ACHN (cell line): ENCODE measurements at regions of chr2 and their contacts with region 1.

Region 1: GRCh38 chr2:26577434-26578112 is 63.6 kb downstream of the CIB4 start:
- DNase-seq: peak; percentile 60

Region 2: DNA sequence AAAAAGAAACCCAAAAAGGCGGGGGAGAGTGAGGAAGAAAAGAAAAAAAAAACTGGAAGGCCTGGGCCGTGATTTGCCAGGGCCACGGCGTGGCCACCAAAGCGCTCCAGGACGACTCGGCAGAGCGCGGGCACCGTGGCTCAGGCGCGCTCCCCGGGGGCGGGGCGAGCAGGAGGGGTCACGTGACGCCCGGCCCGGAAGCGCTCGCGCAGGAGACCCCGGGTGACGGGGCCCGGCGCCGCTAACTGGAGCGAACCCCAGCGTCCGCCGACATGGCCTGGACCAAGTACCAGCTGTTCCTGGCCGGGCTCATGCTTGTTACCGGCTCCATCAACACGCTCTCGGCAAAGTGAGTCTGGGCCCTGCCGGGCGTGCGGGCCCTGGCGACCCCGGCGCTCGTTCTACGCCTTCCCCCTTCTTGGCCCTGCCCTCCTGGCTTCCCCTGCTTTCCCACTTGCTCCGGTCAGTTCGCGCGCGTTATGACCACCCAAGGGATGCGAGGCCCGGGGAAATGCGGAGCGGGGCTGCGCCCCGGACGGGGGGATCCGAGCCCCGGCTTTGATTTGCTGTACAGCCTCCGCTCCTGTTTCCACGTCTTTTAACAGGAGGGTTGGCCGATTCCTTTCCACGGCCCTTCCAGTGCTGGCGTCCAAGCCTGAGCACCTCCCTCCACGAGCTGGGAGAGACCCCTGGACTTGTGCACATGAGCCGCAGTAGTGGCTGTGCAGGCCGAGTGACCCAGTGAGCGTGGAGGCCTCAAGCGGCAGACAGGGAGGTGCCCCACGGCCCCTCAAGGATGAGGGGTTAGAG is 186.7 kb after region 1 on chr2 and contains the start of gene SLC35F6:
- in situ Hi-C with region 1: loop called (anchors 25 kb)
- DNase-seq: peak; percentile 84